Left cardiac atrium (tissue), 4 donors: ENCODE measurements at regions of chr17 and their contacts with region 1.

Region 1: DNA sequence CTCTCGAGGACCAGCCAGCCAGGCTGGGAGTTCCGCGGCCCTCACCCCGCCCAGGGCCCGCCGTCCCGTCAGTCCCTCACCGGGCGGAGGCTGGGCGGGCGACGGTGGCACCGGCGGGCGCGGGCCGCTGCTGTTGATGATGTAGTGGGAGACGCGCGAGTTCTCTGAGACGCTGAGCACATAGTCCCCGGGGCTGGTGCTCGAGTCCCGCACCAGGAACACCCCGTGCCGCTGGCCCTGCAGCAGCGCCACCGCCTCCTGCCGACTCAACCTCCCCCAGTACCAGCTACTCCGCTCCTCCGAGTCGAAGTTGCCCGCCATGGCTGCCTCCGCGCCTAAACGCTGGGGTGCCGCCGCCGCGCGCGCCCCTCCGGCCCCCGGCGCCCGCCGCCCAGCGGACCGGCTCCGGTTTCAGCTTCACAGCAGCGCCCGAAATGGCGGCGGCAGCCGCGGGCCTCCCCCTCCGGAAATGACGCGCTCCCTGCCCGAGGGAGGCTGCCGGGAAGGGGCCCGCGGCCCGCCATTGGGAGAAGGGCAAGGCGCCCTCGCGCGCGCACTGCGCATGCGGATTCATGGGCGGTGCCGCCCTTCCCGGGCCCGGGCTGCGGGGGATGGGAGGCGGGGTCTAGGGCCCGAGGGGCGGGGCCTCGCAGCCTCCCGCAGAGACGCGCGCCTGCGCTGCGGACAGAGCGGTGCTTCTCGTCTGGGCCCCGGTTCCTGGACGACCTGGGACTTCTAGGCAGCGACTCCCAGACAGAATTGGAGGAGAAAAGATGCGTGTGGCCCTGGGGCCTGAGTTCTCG is at the start of gene CRK:
- DNase-seq: peak; percentile 97
- ATAC-seq: peak; percentile 94 to 97
- total RNA-seq, gene CRK: 37.0 to 44.4 TPM

Region 2: GRCh38 chr17:1365445-1366039 is 90.5 kb before region 1 on chr17:
- intact Hi-C with region 1: loop called (anchors 5 to 10 kb)
- DNase-seq: peak; percentile 42
- ATAC-seq: peak; percentile 75 to 81

Region 3: DNA sequence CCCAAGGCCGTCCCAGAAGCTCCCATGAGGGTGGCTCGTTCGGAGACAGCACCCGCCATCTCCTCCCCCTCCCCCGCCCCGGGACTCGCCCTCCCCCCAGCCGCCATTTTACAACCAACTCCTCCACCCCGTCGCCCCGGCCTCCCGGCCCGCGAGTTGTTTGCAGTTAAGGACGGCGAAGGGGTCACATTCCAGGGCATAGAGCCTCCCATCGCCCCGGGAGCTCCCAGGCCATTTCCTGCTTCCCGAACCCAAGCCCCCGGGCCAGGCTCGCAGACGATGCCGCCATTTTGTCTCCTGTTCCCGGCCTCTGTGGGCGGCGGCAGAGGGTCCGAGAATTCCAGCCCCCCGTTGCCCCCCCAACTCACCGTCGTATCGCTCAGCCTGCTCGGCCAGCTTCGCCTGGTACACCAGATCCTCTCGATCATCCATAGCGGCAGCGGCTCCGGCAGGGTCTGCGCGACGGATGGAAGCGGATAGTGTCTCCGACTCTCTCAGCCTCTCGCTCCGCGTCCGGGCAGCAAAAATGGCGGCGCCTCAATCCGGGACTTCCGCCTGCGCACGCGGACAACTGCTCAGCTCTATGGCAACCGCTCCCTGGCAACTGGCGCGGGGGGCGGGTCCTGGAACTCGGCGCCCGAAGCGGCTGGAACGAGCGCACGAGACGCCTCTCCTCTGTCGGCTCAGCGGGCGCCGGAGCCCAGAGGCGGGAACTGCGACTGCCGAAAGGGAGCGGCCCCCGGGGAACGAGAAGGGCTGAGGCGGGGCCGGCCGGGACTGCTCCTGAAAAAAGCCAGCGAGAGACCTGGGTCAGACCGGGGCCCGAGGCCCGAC is 56.1 kb before region 1 on chr17 and contains the start of gene YWHAE:
- intact Hi-C with region 1: loop called in 1 of 2 experiments (anchors 10 kb)
- DNase-seq: peak; percentile 98
- ATAC-seq: peak; percentile 98
- total RNA-seq, gene YWHAE: 491 to 596 TPM

Region 4: DNA sequence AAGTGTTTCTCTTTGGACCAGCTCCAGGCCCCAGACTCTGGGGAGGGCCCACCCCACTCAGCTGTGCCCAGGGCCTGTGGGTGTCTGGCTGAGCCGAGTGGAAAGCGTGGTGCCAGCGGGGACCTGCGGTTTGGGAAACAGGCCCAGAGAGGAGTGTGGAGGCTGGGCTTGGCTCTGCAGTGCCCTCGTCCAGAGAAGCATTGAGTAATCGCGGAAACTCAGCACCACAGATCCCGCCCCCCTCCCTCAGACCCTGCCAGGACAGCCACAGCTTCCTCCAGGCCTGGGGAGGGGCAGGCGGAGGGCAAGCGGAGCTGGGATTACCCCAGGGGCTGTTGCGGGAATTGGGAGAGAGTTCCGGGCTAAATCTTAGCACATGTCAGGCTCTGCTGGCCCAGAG is 121.2 kb after region 1 on chr17:
- intact Hi-C with region 1: no loop called
- DNase-seq: peak; percentile 92
- ATAC-seq: peak; percentile 88 to 90